Activated CD8-positive, alpha-beta memory T cell treated with anti-CD3 and anti-CD28 coated beads, Interleukin-2, amount 10 ng/mL, durations not matched to agents 7 days and 5 days (primary cell): ENCODE measurements at regions of chr9 and their contacts with region 1.

Region 1: GRCh38 chr9:13427587-13427986 is 148.1 kb upstream of the MPDZ start:
- DNase-seq: no peak
- ATAC-seq: no peak
- H3K4me3 Mint-ChIP-seq: no peak overlapping the region
- H3K27ac Mint-ChIP-seq: no peak overlapping the region
- H3K4me1 Mint-ChIP-seq: no peaks in the 10 kb centered on the region
- H3K27me3 Mint-ChIP-seq: no peaks in the 10 kb centered on the region

Region 2: GRCh38 chr9:14353222-14354056 is 925.9 kb after region 1 on chr9:
- CTCF ChIA-PET with region 1: interaction called, 24 read pairs
- DNase-seq: peak; percentile 84
- ATAC-seq: peak; percentile 75
- H3K4me3 Mint-ChIP-seq: no peak overlapping the region
- H3K27ac Mint-ChIP-seq: no peak overlapping the region
- H3K4me1 Mint-ChIP-seq: no peaks in the 10 kb centered on the region
- H3K27me3 Mint-ChIP-seq: peaks cover 9% of the 10 kb centered on the region